ENCODE measurements at regions of chr1 and their contacts with region 1.

Region 1: DNA sequence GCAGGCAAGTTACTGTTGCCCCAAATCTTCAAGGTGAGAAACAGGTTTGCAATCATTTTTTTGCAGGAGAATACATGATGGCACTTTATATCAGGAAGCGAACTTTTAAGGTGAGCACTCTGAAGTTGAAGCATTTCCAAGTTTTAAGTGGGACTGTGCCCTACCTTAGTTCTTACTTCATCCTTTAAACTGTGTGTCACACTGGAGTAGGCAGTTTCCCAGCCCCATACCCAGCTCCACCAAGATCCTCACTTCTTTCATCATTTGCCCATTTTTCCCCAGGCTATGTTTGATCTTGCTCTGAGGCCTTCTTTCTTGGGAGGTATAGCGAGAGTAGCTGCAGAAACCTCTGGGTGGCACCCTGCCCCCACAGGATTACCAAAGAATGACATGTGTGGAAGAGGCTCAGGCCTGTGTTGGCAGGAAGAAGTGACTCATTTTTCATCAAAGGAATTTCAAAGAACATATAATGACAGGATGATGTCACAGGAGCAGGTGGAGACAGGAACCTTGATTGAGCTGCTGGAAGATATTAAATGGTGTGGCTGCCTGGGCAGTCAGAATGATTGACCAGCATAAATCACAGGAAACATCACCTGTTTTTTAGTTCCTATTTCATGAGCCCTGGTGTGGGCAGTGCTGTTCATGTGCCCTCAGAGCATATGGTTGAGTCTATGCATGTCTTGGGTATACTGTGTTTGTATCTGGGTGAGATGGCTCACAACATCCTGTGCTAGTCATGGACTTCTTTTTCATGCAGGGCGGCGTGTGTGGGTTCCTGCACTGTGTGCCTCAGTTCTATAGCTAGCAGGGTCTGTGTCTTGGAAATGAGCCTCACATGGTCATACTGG is 20.8 kb upstream of the MACF1 start:
- DNase-seq: peak; percentile 100
- H3K4me3 ChIP-seq: no peak overlapping the region
- H3K27ac ChIP-seq: peak overlapping the region; percentile 93
- H3K4me1 ChIP-seq: peaks cover 59% of the 10 kb centered on the region
- H3K27me3 ChIP-seq: no peaks in the 10 kb centered on the region
- CTCF ChIP-seq: peak; percentile 40 to 52

Region 2: GRCh38 chr1:39132505-39133339 is 51.0 kb before region 1 on chr1:
- CTCF ChIA-PET with region 1: no interaction called
- dilution Hi-C with region 1: no loop called
- in situ Hi-C with region 1: loop called in 1 of 2 experiments (anchors 10 kb)
- intact Hi-C with region 1: loop called (anchors 1 kb)
- DNase-seq: peak; percentile 80
- H3K4me3 ChIP-seq: no peak overlapping the region
- H3K27ac ChIP-seq: peak overlapping the region; percentile 98
- H3K4me1 ChIP-seq: peaks cover 74% of the 10 kb centered on the region
- H3K27me3 ChIP-seq: no peaks in the 10 kb centered on the region
- CTCF ChIP-seq: peak; percentile 36 to 62

Region 3: DNA sequence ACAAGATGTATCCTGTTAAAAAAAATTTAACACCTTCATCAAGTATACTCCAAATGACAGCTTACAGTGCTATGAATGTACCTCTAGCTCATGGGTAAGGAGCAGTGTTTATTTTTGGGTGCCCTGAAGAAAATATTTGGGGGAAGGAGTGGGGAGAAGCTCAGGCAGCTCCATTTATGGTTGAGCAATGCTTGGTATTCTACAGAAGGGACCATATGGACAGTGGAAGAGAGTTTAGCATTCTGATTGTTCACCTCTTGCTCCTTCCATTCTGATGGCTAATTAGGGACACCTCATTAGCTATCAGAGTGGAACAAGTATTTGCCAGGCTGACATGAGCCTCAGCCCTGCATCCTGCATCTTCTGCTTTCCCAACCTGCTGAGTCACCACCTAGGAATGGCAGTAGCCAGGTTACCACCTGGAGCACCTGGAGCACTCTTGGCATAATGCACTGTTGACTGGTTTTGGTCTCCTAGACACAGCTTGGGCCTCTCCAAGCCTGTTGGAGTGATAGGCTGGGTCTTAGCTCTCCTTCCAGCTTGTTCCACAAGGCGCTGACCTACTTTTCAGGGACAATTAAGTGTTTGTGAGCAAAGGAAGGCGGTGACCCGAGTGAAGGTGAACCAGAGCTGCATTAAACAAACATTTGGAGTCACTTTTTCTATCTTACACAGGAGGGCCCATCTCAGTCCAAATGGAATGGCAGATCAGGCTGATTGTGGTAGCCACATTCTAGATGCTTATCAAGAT is 41.2 kb before region 1 on chr1:
- CTCF ChIA-PET with region 1: interaction called, 4 read pairs
- dilution Hi-C with region 1: no loop called
- in situ Hi-C with region 1: loop called in 1 of 2 experiments (anchors 10 kb)
- intact Hi-C with region 1: loop called (anchors 1 kb)
- DNase-seq: peak; percentile 97
- H3K4me3 ChIP-seq: no peak overlapping the region
- H3K27ac ChIP-seq: peak overlapping the region; percentile 84
- H3K4me1 ChIP-seq: peaks cover 50% of the 10 kb centered on the region
- H3K27me3 ChIP-seq: no peaks in the 10 kb centered on the region
- CTCF ChIP-seq: peak; percentile 7 to 14

Region 4: GRCh38 chr1:39272027-39272797 is 88.5 kb after region 1 on chr1:
- CTCF ChIA-PET with region 1: no interaction called
- dilution Hi-C with region 1: no loop called
- in situ Hi-C with region 1: no loop called
- intact Hi-C with region 1: no loop called
- DNase-seq: no peak
- H3K4me3 ChIP-seq: no peak overlapping the region
- H3K27ac ChIP-seq: no peak overlapping the region
- H3K4me1 ChIP-seq: peaks cover 47% of the 10 kb centered on the region
- H3K27me3 ChIP-seq: no peaks in the 10 kb centered on the region
- CTCF ChIP-seq: no peak

Region 5: DNA sequence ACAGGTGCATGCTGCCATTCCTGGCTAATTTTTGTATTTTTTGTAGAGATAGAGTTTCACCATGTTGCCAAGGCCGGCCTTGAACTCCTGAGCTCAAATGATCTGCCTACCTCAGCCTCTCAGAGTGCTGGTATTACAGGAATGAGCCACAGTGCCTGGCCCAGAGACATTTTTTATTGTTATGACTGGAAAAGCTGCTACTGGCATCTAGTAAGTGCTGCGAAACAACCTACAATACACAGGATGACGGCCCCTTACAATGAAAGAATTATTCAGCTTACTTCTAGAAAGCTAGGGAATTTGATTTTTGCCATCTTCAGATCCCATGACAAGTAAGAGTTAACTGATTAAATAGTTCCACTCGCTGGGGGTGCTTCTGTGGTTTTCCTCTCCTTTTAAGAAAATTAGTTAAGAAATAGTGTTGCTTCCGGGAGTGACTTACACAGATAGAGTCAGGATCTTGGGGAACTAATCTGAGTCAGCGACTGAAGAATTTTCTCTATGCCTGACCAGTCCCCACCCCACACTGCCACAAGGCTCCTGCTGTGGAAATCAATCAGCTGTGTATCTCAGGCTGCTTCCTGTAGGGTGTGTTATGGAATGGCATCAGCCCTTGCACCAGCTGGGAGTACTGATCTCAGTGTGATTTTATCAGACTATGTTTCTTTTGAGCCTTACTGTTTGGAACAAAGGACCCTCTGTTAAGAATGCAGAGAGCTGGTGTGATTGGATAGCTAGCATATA is 214.7 kb after region 1 on chr1:
- CTCF ChIA-PET with region 1: interaction called, 16 read pairs
- dilution Hi-C with region 1: no loop called
- in situ Hi-C with region 1: no loop called
- intact Hi-C with region 1: no loop called
- DNase-seq: peak; percentile 96
- H3K4me3 ChIP-seq: peak overlapping the region in 1 of 3 experiments; percentile 30
- H3K27ac ChIP-seq: peak overlapping the region; percentile 99
- H3K4me1 ChIP-seq: peaks cover 59% of the 10 kb centered on the region
- H3K27me3 ChIP-seq: no peaks in the 10 kb centered on the region
- CTCF ChIP-seq: no peak

Measured in mammary epithelial cell (primary cell).